GM10248 (cell line): ENCODE measurements at regions of chr13 and their contacts with region 1.

Region 1: DNA sequence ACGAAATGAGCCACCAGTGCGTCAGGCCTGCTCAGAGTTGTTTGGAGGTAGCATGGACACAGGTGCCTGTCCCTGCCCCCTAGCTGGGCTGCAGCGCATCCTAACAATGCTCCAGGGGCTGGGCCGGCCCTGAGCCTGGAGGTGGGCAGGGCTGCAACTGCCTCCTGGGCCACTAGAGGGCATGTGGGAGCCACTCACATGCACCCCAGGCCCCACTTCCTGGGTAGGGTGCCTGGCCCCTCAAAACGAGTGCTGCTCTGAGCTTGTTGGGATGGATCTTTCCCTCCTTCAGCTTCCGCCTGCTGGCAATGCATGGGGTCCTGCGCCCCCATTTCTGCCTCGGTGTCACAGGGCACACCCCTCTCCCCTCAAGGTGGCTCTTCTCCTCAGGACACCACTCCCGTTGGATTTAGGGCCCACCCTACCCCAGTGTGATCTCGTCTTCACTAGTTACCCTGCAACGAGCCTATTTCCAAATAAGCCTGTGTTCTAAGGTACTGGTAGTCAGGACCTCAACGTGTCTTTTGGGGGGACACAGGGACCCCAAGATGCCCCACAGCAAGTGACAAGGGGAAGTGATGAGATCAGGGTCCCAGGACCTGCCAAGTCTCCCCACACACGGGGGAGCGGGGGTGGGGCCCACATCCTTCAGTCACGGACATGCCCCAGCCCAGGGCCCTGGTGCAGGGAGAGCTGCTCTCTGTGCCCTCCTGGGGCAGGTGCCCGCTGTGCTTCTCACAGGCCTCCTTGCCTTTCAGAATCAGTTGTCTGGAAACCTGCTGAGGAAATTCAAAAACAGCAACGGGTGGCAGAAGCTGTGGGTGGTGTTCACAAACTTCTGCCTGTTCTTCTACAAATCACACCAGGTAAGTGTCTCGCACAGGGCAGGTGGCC is 131.3 kb downstream of the STK24 start:
- DNase-seq: peak; percentile 91
- CTCF ChIP-seq: peak; percentile 99

Region 2: DNA sequence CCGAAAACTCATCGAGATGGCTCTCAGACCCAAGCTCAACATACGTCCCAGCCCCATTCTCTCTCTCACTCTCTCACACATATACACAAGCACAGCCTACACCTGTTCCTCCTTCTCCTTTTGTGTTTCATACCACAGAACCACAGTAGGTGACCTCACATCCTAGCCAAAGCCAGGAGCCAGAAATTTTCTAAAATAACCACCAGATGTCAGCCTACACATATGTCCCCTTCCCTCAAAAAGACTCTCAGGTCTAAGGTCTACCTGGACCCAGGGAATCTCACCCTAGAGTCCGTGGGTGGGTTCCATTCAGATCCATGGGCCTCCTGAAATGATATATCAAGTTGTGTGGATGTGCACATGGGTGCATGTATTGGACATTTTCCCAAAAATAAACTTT is 596.3 kb before region 1 on chr13:
- CTCF ChIA-PET with region 1: no interaction called
- POLR2A ChIA-PET with region 1: no interaction called
- DNase-seq: peak; percentile 28
- CTCF ChIP-seq: no peak

Region 3: GRCh38 chr13:98416345-98416845 is 29.2 kb before region 1 on chr13:
- CTCF ChIA-PET with region 1: interaction called, 11 read pairs
- POLR2A ChIA-PET with region 1: no interaction called
- DNase-seq: no peak
- CTCF ChIP-seq: no peak

Region 4: GRCh38 chr13:98504371-98504963 is 58.9 kb after region 1 on chr13:
- CTCF ChIA-PET with region 1: interaction called, 13 read pairs
- POLR2A ChIA-PET with region 1: no interaction called
- DNase-seq: peak; percentile 66
- CTCF ChIP-seq: no peak

Region 5: DNA sequence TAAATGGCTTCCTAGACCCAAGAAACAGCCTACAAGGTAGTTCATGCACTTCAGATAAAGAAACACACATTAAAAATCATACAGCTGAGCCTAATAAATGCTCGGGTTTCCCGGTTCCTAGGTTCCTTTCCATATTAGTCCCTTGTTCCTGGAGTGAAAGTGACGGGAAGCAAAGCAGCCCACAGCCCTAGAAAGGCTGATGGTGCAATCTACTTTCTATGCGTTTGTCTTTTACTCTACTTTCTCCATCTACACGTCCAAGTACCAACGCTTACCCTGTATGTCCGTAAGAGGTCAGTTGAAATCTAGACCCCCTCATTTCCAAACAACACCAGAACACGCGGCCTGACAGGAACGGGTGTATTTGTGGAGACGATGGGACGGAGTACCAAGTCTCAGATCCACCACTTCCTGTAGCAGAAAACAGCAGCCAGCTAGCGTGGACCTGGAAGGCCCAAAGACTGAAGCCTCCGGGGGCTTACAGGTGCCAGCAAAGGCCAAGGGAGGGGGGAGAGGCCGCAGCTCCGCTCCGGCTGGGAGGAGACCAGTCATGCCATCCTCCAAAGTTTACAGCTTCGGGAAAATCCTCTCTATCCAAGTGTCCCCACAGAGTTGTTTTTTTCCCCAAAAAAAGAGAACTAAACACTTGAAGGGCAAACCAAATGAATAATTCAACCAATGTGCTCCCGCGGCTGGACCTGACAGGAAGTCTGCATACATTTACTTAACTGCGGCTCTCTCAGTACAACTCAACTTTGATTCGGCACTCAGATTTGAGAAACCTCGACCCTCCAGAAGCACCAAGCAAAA is 97.2 kb after region 1 on chr13:
- CTCF ChIA-PET with region 1: interaction called, 10 read pairs
- POLR2A ChIA-PET with region 1: no interaction called
- DNase-seq: peak; percentile 52
- CTCF ChIP-seq: no peak

Region 6: GRCh38 chr13:98672944-98673545 is 227.5 kb after region 1 on chr13:
- CTCF ChIA-PET with region 1: interaction called, 75 read pairs
- POLR2A ChIA-PET with region 1: no interaction called
- DNase-seq: peak; percentile 81
- CTCF ChIP-seq: peak; percentile 75